Activated T-helper 2 cell treated with anti-CD3 and anti-CD28 coated beads, Interferon-gamma antibody, Interleukin-2, Interleukin-4, amounts not matched to agents 10 μg/mL and 5 μg/mL and 100 μg/mL, durations not matched to agents 14 hours and 24 hours and 36 hours (primary cell): ENCODE measurements at regions of chrX and their contacts with region 1.

Region 1: GRCh38 chrX:39578354-39578869 is 519.3 kb downstream of the BCOR start:
- DNase-seq: peak; percentile 31
- H3K4me3 Mint-ChIP-seq: peak overlapping the region; percentile 52
- H3K27ac Mint-ChIP-seq: peak overlapping the region; percentile 76
- H3K4me1 Mint-ChIP-seq: peaks cover 34% of the 10 kb centered on the region
- H3K27me3 Mint-ChIP-seq: no peaks in the 10 kb centered on the region

Region 2: GRCh38 chrX:39550795-39551361 is 27.5 kb before region 1 on chrX:
- intact Hi-C with region 1: loop called (anchors 1 kb)
- DNase-seq: no peak
- H3K4me3 Mint-ChIP-seq: no peak overlapping the region
- H3K27ac Mint-ChIP-seq: no peak overlapping the region
- H3K4me1 Mint-ChIP-seq: peaks cover 14% of the 10 kb centered on the region
- H3K27me3 Mint-ChIP-seq: no peaks in the 10 kb centered on the region

Region 3: DNA sequence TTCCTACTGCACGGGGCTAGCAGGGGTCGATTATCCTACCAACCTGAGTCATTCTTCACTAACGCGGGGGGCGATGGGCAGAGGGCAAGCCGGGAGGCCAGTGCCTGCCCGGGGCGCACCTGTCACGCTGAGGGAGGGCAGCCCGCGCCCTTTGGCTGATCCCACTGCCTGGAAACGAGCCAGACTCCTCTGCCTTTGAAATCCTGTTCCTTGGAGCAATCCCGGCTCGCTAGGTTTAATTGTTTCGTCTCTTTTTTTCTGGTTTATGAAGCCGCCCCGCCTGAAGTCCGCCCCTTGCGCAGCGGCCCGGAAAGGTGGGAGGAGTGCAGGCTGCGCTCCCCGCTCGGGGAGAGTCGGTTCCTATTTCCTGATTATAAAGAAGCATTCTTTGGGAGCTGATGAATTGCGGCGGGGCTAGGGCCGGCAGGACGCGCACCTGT is 35.1 kb after region 1 on chrX:
- intact Hi-C with region 1: loop called (anchors 2 kb)
- DNase-seq: no peak
- H3K4me3 Mint-ChIP-seq: peak overlapping the region; percentile 85
- H3K27ac Mint-ChIP-seq: peak overlapping the region; percentile 88
- H3K4me1 Mint-ChIP-seq: peaks cover 38% of the 10 kb centered on the region
- H3K27me3 Mint-ChIP-seq: no peaks in the 10 kb centered on the region